ENCODE measurements at regions of chr7 and their contacts with region 1.

Region 1: DNA sequence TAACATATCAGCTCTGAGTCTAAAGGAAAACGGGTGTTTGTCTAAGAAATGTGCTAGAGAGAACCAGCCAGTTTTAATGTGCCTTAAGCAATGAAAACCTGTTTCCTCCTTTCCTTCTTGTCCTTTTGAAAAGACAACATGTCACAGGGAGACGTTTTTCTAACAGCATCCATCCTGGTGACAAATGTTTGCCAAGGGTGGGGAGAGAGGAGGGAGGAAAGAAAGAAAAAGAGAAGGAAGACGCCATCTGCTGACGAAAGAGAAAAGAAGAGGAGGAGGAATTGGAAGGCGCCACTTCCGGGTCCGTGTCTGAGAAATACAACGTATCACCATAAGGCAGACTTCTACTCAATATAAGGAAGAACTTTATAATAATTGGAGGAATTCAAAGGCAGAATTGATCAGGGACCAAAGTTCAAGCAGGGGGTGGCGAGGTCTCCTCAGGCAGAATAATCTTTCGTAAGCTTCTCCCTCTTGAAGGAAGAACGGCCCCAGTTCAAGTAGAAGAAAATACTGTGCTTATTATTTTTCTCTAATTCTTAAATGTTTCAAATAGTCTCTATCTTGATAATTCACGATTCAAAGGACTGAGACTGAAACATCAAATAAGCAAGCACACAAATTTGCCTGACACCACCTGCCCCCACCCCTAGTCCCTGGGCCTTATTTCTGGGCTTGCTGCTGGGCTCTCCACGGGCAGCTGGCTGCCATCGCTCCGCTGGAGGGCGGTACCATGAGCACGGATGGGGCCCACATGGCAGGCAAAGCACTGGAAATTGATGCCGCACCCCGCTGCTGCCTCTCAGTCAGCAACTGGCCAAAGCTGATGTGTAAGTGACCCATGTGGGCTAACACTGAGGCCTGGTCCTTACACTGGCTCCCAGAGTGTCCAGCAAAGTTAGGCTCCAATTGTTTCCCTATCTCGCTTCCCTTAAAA is 273.7 kb upstream of the KLF14 start:
- DNase-seq: peak in 7 of 9 donors; percentile 51 to 69 (median 63)
- ATAC-seq: peak; percentile 72
- H3K4me3 ChIP-seq: no peak overlapping the region
- H3K4me3 Mint-ChIP-seq: peak overlapping the region in 9 of 10 donors; percentile 52 to 87 (median 69)
- H3K27ac ChIP-seq: peak overlapping the region; percentile 67
- H3K27ac Mint-ChIP-seq: peak overlapping the region; percentile 83 to 97 (median 88)
- H3K4me1 ChIP-seq: peaks cover 60 to 64% of the 10 kb centered on the region in 2 donors
- H3K4me1 Mint-ChIP-seq: peaks cover 68 to 94% (median 87%) of the 10 kb centered on the region in 7 donors
- H3K27me3 ChIP-seq: no peaks in the 10 kb centered on the region
- H3K27me3 Mint-ChIP-seq: no peaks in the 10 kb centered on the region

Region 2: DNA sequence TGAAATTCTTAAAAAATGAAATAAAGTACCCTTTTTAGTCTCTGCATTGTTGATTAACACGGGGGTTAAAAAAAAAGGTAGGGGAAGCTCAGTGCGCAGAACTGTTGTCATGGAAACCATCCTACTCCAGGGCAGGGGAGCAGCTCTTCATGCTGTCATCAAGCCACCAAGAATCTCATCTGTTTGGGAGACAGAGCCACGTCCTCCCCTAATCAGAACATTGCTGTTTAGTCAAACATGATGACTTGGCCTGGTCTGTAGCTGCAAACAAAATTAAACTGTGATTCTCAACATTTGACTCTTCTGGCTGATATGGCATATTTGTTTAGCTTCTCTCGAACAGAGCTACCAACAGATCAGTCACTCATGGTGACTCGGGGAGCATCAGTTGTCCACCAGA is 19.2 kb before region 1 on chr7:
- CTCF ChIA-PET with region 1: interaction called, 20 read pairs
- POLR2A ChIA-PET with region 1: interaction called, 3 read pairs
- intact Hi-C with region 1: loop called in 1 of 2 experiments (anchors 2 kb)
- DNase-seq: peak in 5 of 9 donors; percentile 30 to 65 (median 52)
- ATAC-seq: peak; percentile 63
- H3K4me3 ChIP-seq: no peak overlapping the region
- H3K4me3 Mint-ChIP-seq: peak overlapping the region; percentile 5 to 59 (median 32)
- H3K27ac ChIP-seq: peak overlapping the region; percentile 65
- H3K27ac Mint-ChIP-seq: peak overlapping the region in 7 of 9 donors; percentile 86 to 94 (median 91)
- H3K4me1 ChIP-seq: peaks cover 69 to 72% of the 10 kb centered on the region in 2 donors
- H3K4me1 Mint-ChIP-seq: peaks cover 28 to 78% (median 48%) of the 10 kb centered on the region in 7 donors
- H3K27me3 ChIP-seq: no peaks in the 10 kb centered on the region
- H3K27me3 Mint-ChIP-seq: no peaks in the 10 kb centered on the region

Region 3: GRCh38 chr7:131021460-131021859 is 13.8 kb after region 1 on chr7:
- CTCF ChIA-PET with region 1: interaction called, 3 read pairs
- POLR2A ChIA-PET with region 1: interaction called, 3 read pairs
- intact Hi-C with region 1: loop called in 1 of 2 experiments (anchors 1 kb)
- DNase-seq: no peak
- ATAC-seq: peak; percentile 23
- H3K4me3 ChIP-seq: peak overlapping the region; percentile 14
- H3K4me3 Mint-ChIP-seq: peak overlapping the region; percentile 34 to 76 (median 62)
- H3K27ac ChIP-seq: peak overlapping the region; percentile 23
- H3K27ac Mint-ChIP-seq: peak overlapping the region; percentile 71 to 90 (median 76)
- H3K4me1 ChIP-seq: peaks cover 44 to 58% of the 10 kb centered on the region in 2 donors
- H3K4me1 Mint-ChIP-seq: peaks cover 46 to 96% (median 85%) of the 10 kb centered on the region in 7 donors
- H3K27me3 ChIP-seq: no peaks in the 10 kb centered on the region
- H3K27me3 Mint-ChIP-seq: no peaks in the 10 kb centered on the region

Region 4: GRCh38 chr7:131031099-131031868 is 23.6 kb after region 1 on chr7:
- CTCF ChIA-PET with region 1: no interaction called
- POLR2A ChIA-PET with region 1: no interaction called
- intact Hi-C with region 1: loop called in 1 of 2 experiments (anchors 1 kb)
- DNase-seq: no peak
- ATAC-seq: peak; percentile 33
- H3K4me3 ChIP-seq: no peak overlapping the region
- H3K4me3 Mint-ChIP-seq: peak overlapping the region; percentile 25 to 80 (median 69)
- H3K27ac ChIP-seq: no peak overlapping the region
- H3K27ac Mint-ChIP-seq: peak overlapping the region in 8 of 9 donors; percentile 24 to 86 (median 78)
- H3K4me1 ChIP-seq: peaks cover 45 to 53% of the 10 kb centered on the region in 2 donors
- H3K4me1 Mint-ChIP-seq: peaks cover 57 to 96% (median 94%) of the 10 kb centered on the region in 7 donors
- H3K27me3 ChIP-seq: no peaks in the 10 kb centered on the region
- H3K27me3 Mint-ChIP-seq: no peaks in the 10 kb centered on the region

Region 5: GRCh38 chr7:131040467-131040932 is 32.8 kb after region 1 on chr7:
- CTCF ChIA-PET with region 1: interaction called, 5 read pairs
- POLR2A ChIA-PET with region 1: no interaction called
- intact Hi-C with region 1: loop called (anchors 1 kb)
- DNase-seq: peak in 7 of 9 donors; percentile 31 to 63 (median 56)
- ATAC-seq: peak; percentile 71
- H3K4me3 ChIP-seq: no peak overlapping the region
- H3K4me3 Mint-ChIP-seq: peak overlapping the region; percentile 16 to 84 (median 60)
- H3K27ac ChIP-seq: no peak overlapping the region
- H3K27ac Mint-ChIP-seq: peak overlapping the region; percentile 29 to 82 (median 54)
- H3K4me1 ChIP-seq: peaks cover 14 to 27% of the 10 kb centered on the region in 2 donors
- H3K4me1 Mint-ChIP-seq: peaks cover 44 to 78% (median 68%) of the 10 kb centered on the region in 7 donors
- H3K27me3 ChIP-seq: no peaks in the 10 kb centered on the region
- H3K27me3 Mint-ChIP-seq: no peaks in the 10 kb centered on the region